B cell (primary cell): ENCODE measurements at regions of chr1 and their contacts with region 1.

Region 1: DNA sequence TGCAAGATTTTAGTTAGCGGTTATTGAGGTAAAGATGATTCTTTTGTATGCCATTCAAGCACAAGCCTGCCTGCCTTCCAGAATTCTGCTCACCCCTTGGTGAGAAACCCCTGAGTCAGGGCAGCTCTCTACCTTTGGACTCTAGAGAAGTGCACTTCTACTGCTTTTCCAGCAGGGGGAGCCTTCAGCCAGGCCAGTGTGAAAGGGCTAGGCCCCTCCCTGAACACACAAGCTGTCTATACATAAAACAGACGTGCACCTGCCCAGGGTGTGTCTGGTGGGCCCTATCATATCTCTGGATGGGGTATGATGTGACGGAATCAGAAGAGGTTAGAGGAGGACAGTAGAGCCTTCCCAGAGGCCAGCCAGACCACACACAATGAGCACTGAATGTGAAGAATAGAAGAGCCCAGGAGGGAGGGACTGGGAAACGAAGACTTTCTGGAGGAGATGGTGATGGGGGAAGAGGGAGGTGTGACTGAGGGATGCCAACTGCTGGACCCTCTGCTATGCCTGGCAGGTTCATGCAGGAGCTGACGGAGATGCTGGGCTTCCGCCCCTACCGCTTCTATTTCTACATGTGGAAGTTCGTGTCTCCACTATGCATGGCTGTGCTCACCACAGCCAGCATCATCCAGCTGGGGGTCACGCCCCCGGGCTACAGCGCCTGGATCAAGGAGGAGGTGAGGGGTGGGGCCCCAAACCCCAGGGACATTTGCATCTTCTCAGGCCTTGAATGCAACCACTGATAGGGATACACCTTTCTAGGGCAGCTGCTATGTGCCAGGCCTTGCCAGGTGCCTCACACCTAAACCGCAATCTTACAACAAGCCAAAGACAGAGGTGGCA is 13.0 kb upstream of the KCNC4 start:
- DNase-seq: peak; percentile 71
- ATAC-seq: peak; percentile 93
- H3K4me3 ChIP-seq: no peak overlapping the region
- H3K4me3 Mint-ChIP-seq: no peak overlapping the region
- H3K27ac ChIP-seq: no peak overlapping the region
- H3K27ac Mint-ChIP-seq: no peak overlapping the region
- H3K4me1 ChIP-seq: no peaks in the 10 kb centered on the region
- H3K4me1 Mint-ChIP-seq: no peaks in the 10 kb centered on the region
- H3K27me3 ChIP-seq: peaks cover 0 to 3% (median 0%) of the 10 kb centered on the region in 4 experiments
- H3K27me3 Mint-ChIP-seq: peaks cover 4% of the 10 kb centered on the region
- CTCF ChIP-seq: peak; percentile 97

Region 2: GRCh38 chr1:110150330-110151174 is 46.6 kb before region 1 on chr1 and contains the start of gene SLC6A17:
- CTCF ChIA-PET with region 1: no interaction called
- POLR2A ChIA-PET with region 1: no interaction called
- intact Hi-C with region 1: no loop called
- DNase-seq: peak; percentile 27
- ATAC-seq: peak; percentile 39
- H3K4me3 ChIP-seq: peak within 1 kb of the TSS in 1 of 5 experiments; percentile 5
- H3K4me3 Mint-ChIP-seq: peak within 1 kb of the TSS; percentile 53
- H3K27ac ChIP-seq: no peak within 1 kb of the TSS
- H3K27ac Mint-ChIP-seq: no peak within 1 kb of the TSS
- H3K4me1 ChIP-seq: peaks cover 7 to 10% of the 10 kb centered on the region in 2 donors
- H3K4me1 Mint-ChIP-seq: peaks cover 3% of the 10 kb centered on the region
- H3K27me3 ChIP-seq: peaks cover 0 to 65% (median 44%) of the 10 kb centered on the region in 4 experiments
- H3K27me3 Mint-ChIP-seq: peaks cover 40% of the 10 kb centered on the region
- CTCF ChIP-seq: no peak
- total RNA-seq, gene SLC6A17: not detected in 2 replicates

Region 3: DNA sequence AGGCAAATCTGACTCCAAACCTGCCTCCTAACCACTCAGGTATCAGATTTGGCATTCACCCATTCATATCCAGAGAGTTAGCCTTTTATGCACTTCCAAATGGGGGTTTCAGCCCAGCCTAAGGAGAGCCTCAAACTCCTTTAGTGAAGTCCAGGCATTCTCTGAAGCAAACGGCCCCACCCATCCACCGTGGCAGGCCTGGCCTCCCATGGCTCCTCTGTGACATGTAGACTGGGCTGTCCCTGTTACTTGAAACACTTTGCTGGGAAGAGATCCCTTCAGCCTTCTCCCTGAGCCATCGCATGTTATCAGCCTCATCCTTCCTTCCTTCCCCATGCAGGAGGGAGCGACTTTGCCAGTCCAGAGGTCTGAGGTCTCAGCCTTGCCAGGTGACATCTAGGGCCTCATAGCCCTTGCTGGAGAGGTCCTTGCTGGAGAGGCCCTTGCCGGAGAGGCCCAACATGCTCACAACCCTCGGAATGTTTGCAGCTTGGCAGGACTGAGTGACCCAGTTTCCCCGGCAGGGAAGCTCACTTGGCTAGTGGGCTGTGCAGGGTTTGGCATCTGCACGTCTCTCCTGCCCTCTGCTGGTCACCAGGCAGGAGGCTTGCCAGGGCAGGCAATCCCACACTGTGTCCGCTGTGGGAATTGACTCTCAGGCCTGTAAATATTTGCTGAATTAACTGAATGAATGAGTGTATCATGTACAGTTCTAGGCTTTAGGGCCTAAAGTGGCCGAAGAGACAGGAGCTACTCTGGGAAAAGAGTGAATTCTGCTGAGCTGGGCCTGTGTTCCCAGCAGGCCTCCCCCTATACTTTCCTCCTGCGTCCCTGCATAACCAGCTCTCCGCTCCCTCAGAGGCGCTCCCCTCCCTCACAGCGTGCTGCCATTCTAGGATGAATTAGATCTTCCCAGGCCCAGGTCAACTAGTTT is 115.3 kb after region 1 on chr1:
- CTCF ChIA-PET with region 1: interaction called, 838 read pairs
- POLR2A ChIA-PET with region 1: interaction called, 9 read pairs
- intact Hi-C with region 1: no loop called
- DNase-seq: peak; percentile 81
- ATAC-seq: peak; percentile 95
- H3K4me3 ChIP-seq: no peak overlapping the region
- H3K4me3 Mint-ChIP-seq: no peak overlapping the region
- H3K27ac ChIP-seq: no peak overlapping the region
- H3K27ac Mint-ChIP-seq: no peak overlapping the region
- H3K4me1 ChIP-seq: peaks cover 0 to 4% of the 10 kb centered on the region in 2 donors
- H3K4me1 Mint-ChIP-seq: no peaks in the 10 kb centered on the region
- H3K27me3 ChIP-seq: no peaks in the 10 kb centered on the region
- H3K27me3 Mint-ChIP-seq: no peaks in the 10 kb centered on the region
- CTCF ChIP-seq: peak; percentile 89

Region 4: GRCh38 chr1:110594456-110595352 is 397.6 kb after region 1 on chr1:
- CTCF ChIA-PET with region 1: no interaction called
- POLR2A ChIA-PET with region 1: no interaction called
- intact Hi-C with region 1: no loop called
- DNase-seq: no peak
- ATAC-seq: no peak
- H3K4me3 ChIP-seq: no peak overlapping the region
- H3K4me3 Mint-ChIP-seq: no peak overlapping the region
- H3K27ac ChIP-seq: no peak overlapping the region
- H3K27ac Mint-ChIP-seq: no peak overlapping the region
- H3K4me1 ChIP-seq: peaks cover 0 to 3% of the 10 kb centered on the region in 2 donors
- H3K4me1 Mint-ChIP-seq: peaks cover 2% of the 10 kb centered on the region
- H3K27me3 ChIP-seq: peaks cover 0 to 16% (median 4%) of the 10 kb centered on the region in 4 experiments
- H3K27me3 Mint-ChIP-seq: peaks cover 31% of the 10 kb centered on the region
- CTCF ChIP-seq: no peak

Region 5: GRCh38 chr1:110976089-110976488 is 778.9 kb after region 1 on chr1:
- CTCF ChIA-PET with region 1: no interaction called
- POLR2A ChIA-PET with region 1: no interaction called
- intact Hi-C with region 1: no loop called
- DNase-seq: no peak
- ATAC-seq: no peak
- H3K4me3 ChIP-seq: no peak overlapping the region
- H3K4me3 Mint-ChIP-seq: no peak overlapping the region
- H3K27ac ChIP-seq: no peak overlapping the region
- H3K27ac Mint-ChIP-seq: no peak overlapping the region
- H3K4me1 ChIP-seq: no peaks in the 10 kb centered on the region
- H3K4me1 Mint-ChIP-seq: no peaks in the 10 kb centered on the region
- H3K27me3 ChIP-seq: peaks cover 0 to 19% (median 12%) of the 10 kb centered on the region in 4 experiments
- H3K27me3 Mint-ChIP-seq: peaks cover 55% of the 10 kb centered on the region
- CTCF ChIP-seq: no peak